IMR-90 (cell line): ENCODE measurements at regions of chr1 and their contacts with region 1.

Region 1: GRCh38 chr1:31705080-31705866 is 1.5 kb upstream of the COL16A1 start:
- DNase-seq: peak; percentile 55
- ATAC-seq: peak; percentile 13
- H3K4me3 ChIP-seq: no peak overlapping the region
- H3K27ac ChIP-seq: peak overlapping the region; percentile 83
- H3K4me1 ChIP-seq: peaks cover 41% of the 10 kb centered on the region
- H3K27me3 ChIP-seq: no peaks in the 10 kb centered on the region
- CTCF ChIP-seq: peak; percentile 60
- POLR2A ChIP-seq: no peak
- RAD21 ChIP-seq: peak; percentile 71

Region 2: GRCh38 chr1:31327381-31327780 is 377.9 kb before region 1 on chr1:
- CTCF ChIA-PET with region 1: no interaction called
- POLR2A ChIA-PET with region 1: no interaction called
- dilution Hi-C with region 1: no loop called
- in situ Hi-C with region 1: no loop called
- intact Hi-C with region 1: no loop called
- DNase-seq: peak; percentile 66
- ATAC-seq: no peak
- H3K4me3 ChIP-seq: no peak overlapping the region
- H3K27ac ChIP-seq: no peak overlapping the region
- H3K4me1 ChIP-seq: peaks cover 5% of the 10 kb centered on the region
- H3K27me3 ChIP-seq: no peaks in the 10 kb centered on the region
- CTCF ChIP-seq: no peak
- POLR2A ChIP-seq: no peak
- RAD21 ChIP-seq: no peak

Region 3: DNA sequence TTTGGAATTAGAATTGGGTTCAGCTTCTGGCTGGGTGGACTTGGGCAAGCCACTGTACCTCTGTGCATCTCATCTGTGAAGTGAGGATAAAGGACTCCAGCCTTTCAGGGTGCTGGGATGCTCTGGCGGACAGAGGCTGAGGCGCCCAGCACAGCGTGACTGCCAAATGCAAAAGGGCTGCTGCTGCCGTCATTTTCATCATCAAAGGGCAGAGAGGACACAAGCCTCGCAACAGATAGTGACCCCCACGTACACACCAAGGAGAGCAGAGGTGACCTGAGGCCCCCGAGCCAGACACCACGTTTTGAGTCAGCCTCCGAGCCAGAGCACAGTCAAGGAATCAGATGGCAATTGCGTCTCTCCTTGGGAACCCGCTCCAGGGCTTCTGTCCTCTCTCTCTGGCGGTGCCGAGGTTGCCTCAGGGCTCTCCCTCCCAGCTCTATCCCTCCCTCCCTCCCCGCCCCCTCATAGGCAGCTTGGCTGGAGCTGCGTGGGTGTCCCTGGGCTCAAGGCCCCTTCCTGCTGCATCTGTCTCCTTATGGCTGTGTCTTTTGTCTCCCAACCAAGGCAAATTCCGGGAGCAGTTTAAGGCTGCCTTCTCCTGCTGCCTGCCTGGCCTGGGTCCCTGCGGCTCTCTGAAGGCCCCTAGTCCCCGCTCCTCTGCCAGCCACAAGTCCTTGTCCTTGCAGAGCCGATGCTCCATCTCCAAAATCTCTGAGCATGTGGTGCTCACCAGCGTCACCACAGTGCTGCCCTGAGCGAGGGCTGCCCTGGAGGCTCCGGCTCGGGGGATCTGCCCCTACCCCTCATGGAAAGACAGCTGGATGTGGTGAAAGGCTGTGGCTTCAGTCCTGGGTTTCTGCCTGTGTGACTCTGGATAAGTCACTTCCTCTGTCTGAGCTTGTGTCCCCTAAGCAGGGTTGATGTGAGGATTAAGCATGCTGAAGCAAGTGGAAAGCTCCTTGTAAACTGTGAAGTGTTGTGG is 78.8 kb before region 1 on chr1:
- CTCF ChIA-PET with region 1: no interaction called
- POLR2A ChIA-PET with region 1: no interaction called
- dilution Hi-C with region 1: no loop called
- in situ Hi-C with region 1: no loop called
- intact Hi-C with region 1: no loop called
- DNase-seq: peak; percentile 29
- ATAC-seq: peak; percentile 30
- H3K4me3 ChIP-seq: no peak overlapping the region
- H3K27ac ChIP-seq: no peak overlapping the region
- H3K4me1 ChIP-seq: peaks cover 8% of the 10 kb centered on the region
- H3K27me3 ChIP-seq: no peaks in the 10 kb centered on the region
- CTCF ChIP-seq: no peak
- POLR2A ChIP-seq: no peak
- RAD21 ChIP-seq: no peak

Region 4: GRCh38 chr1:31651089-31651420 is 54.2 kb before region 1 on chr1:
- CTCF ChIA-PET with region 1: no interaction called
- POLR2A ChIA-PET with region 1: no interaction called
- dilution Hi-C with region 1: no loop called
- in situ Hi-C with region 1: no loop called
- intact Hi-C with region 1: no loop called
- DNase-seq: peak; percentile 59
- ATAC-seq: no peak
- H3K4me3 ChIP-seq: no peak overlapping the region
- H3K27ac ChIP-seq: no peak overlapping the region
- H3K4me1 ChIP-seq: peaks cover 2% of the 10 kb centered on the region; the same call in 1 of the 2 replicates
- H3K27me3 ChIP-seq: no peaks in the 10 kb centered on the region
- CTCF ChIP-seq: no peak
- POLR2A ChIP-seq: no peak
- RAD21 ChIP-seq: no peak

Region 5: DNA sequence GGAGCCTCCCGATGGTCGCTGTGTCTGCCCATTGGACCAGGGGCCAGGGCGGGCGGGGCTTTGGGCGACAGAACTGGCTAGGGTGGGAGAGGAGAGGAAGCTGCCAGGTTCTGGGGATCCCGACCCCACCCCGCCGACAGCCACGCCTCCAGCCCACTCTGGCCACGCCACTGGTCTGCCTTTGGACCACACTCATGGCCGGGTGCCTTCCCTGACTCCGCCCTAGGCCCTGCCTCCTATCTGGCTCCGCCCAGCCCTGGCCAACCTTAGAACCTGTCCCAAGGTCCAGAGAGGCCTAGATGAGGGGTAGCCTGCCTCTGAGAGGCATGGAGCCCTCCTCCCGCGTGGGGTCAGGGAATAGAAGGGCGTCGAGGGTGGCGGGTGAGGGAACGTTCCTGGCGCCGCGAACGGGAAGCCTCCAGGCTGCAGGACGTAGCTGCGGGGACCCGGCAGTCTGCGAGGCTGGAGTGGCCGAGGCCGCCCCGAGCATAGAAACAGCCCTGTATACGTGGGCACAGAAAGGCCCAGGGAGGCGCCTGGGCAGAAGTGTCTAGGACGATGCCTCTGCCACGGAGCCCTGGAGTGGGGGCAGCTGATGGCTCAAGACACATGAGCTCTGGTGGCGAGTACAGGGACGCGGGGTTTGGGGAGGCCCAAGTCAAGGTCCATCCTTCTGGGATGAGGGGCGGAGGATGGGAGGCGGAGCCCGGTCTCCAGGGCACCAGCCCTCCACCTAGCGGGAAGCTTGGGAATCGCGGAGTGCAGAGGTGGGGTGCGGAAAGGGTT is 10.0 kb after region 1 on chr1:
- CTCF ChIA-PET with region 1: interaction called, 28 read pairs
- POLR2A ChIA-PET with region 1: interaction called, 5 read pairs
- dilution Hi-C with region 1: no loop called
- in situ Hi-C with region 1: no loop called
- intact Hi-C with region 1: no loop called
- DNase-seq: peak; percentile 81
- ATAC-seq: peak; percentile 90
- H3K4me3 ChIP-seq: peak overlapping the region; percentile 14
- H3K27ac ChIP-seq: peak overlapping the region; percentile 69
- H3K4me1 ChIP-seq: peaks cover 32% of the 10 kb centered on the region
- H3K27me3 ChIP-seq: peaks cover 4% of the 10 kb centered on the region; the same call in 1 of the 2 replicates
- CTCF ChIP-seq: peak; percentile 83
- POLR2A ChIP-seq: no peak; the same call in 1 of the 2 replicates
- RAD21 ChIP-seq: peak; percentile 55

Region 6: GRCh38 chr1:31745096-31745945 is 40.0 kb after region 1 on chr1:
- CTCF ChIA-PET with region 1: interaction called, 4 read pairs
- POLR2A ChIA-PET with region 1: interaction called, 3 read pairs
- dilution Hi-C with region 1: no loop called
- in situ Hi-C with region 1: no loop called
- intact Hi-C with region 1: loop called (anchors 5 kb)
- DNase-seq: peak; percentile 53
- ATAC-seq: peak; percentile 96
- H3K4me3 ChIP-seq: no peak overlapping the region
- H3K27ac ChIP-seq: no peak overlapping the region
- H3K4me1 ChIP-seq: peaks cover 14% of the 10 kb centered on the region; the same call in 1 of the 2 replicates
- H3K27me3 ChIP-seq: no peaks in the 10 kb centered on the region
- CTCF ChIP-seq: peak; percentile 89
- POLR2A ChIP-seq: no peak
- RAD21 ChIP-seq: peak; percentile 85

Region 7: DNA sequence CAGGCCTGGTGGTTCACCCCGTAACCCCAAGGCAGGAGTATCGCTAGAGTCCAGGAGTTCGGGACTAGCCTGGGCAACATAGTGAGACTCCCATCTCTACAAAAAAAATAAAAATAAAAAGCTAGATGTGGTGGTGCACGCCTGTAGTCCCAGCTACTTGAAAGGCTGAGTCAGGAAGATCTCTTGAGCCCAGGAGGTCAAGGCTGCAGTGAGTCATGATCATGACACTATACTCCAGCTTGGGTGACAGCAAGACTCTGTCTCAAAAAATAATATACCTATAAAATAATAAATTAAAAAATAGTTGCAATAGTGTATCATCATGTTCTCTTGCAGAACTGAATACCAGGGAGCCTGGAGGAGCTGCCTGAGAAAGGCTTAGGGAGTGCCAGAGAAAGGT is 347.6 kb after region 1 on chr1:
- CTCF ChIA-PET with region 1: no interaction called
- POLR2A ChIA-PET with region 1: interaction called, 11 read pairs
- dilution Hi-C with region 1: no loop called
- in situ Hi-C with region 1: no loop called
- intact Hi-C with region 1: no loop called
- DNase-seq: peak; percentile 82
- ATAC-seq: peak; percentile 51
- H3K4me3 ChIP-seq: no peak overlapping the region
- H3K27ac ChIP-seq: no peak overlapping the region
- H3K4me1 ChIP-seq: peaks cover 9% of the 10 kb centered on the region
- H3K27me3 ChIP-seq: no peaks in the 10 kb centered on the region
- CTCF ChIP-seq: no peak
- POLR2A ChIP-seq: no peak
- RAD21 ChIP-seq: no peak